PC-9 (cell line): ENCODE measurements at regions of chr21 and their contacts with region 1.

Region 1: GRCh38 chr21:16594191-16594590 is 864.4 kb downstream of the USP25 start:
- DNase-seq: no peak
- H3K4me3 ChIP-seq: no peak overlapping the region
- H3K27ac ChIP-seq: no peak overlapping the region
- H3K4me1 ChIP-seq: peaks cover 6% of the 10 kb centered on the region
- H3K27me3 ChIP-seq: no peaks in the 10 kb centered on the region
- CTCF ChIP-seq: no peak

Region 2: DNA sequence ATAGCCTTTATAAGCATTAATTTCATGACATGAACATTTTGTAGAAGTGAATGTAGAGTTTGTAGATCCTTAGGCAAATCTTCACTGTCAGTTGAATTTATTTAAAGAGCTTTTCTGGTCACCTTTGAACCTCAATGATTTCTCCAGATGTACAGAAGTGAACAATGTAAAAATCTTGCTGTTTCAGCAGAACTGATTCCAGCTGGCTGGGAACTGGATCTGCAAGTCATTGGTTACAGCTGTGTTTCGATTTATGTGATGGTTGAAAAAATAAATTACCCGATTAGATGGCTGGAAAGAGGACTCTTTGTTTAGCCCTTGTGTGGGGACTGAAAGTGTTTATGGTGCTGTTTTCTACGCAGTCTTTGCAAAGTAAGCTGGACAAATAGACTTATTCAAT is 14.7 kb before region 1 on chr21:
- CTCF ChIA-PET with region 1: no interaction called
- POLR2A ChIA-PET with region 1: interaction called, 17 read pairs
- intact Hi-C with region 1: no loop called
- DNase-seq: no peak
- H3K4me3 ChIP-seq: no peak overlapping the region
- H3K27ac ChIP-seq: no peak overlapping the region
- H3K4me1 ChIP-seq: no peaks in the 10 kb centered on the region
- H3K27me3 ChIP-seq: no peaks in the 10 kb centered on the region
- CTCF ChIP-seq: no peak

Region 3: DNA sequence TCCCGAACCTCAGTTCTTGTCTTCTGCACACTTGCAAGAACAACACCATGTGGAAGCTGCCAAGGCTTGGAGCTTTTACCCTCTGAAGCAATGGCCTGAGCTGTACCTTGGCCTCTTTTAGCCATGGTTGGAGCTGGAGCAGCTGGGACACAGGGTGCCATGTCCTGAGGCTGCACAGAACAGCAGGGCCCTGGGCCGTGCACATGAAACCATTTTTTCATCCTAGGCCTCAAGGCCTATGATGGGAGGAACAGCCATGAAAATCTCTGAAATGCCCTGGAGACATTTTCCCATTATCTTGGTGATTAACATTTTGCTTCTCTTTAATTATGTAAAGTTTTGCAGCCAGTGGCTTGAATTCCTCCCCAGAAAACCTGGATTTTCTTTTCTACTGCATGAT is 100.9 kb after region 1 on chr21:
- CTCF ChIA-PET with region 1: no interaction called
- POLR2A ChIA-PET with region 1: no interaction called
- intact Hi-C with region 1: no loop called
- DNase-seq: no peak
- H3K4me3 ChIP-seq: no peak overlapping the region
- H3K27ac ChIP-seq: no peak overlapping the region
- H3K4me1 ChIP-seq: no peaks in the 10 kb centered on the region
- H3K27me3 ChIP-seq: no peaks in the 10 kb centered on the region
- CTCF ChIP-seq: no peak